ENCODE measurements at regions of chr11 and their contacts with region 1.

Region 1: GRCh38 chr11:66126808-66127555 is 56.9 kb downstream of the PACS1 start:
- DNase-seq: peak; percentile 38
- H3K4me3 Mint-ChIP-seq: peak overlapping the region; percentile 67
- H3K27ac Mint-ChIP-seq: peak overlapping the region; percentile 97
- H3K4me1 Mint-ChIP-seq: peaks cover 59% of the 10 kb centered on the region
- H3K27me3 Mint-ChIP-seq: no peaks in the 10 kb centered on the region

Region 2: DNA sequence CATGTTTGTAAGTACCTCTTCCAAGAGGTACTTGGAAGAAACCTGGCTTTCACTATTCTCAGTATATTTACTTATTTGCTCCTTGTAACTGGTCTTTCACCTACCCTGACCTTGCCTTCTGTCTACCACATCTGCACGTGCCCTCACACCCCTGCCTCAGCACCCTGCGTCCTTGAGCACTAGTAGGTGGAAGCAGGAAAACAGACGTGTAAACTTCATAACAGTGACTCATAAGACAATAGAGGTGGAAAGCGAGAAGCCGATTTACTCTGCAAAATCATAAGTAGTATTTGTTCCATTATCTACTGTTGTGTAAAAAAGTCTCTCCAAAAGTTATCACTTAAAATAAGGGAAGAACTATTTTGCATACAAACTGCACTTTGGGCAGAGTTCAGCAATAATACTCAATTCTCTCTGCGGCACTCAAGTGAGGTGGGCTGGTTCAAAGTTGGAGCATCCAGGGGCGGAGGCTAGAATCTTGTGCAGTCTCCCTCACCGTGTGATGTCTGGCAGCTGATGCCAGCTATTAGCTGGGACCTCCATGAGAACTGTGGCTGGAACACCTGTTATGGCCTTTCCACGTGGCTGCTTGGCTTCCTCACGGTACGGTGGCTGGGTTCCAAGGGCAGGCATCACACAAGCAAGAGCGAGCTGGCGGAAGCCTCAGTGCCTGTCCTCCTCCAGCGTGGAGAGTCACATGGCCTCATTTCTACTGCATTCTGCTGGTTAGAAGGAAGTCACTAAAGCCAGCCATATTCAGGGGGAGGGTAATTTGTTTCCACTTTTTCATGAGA is 26.5 kb before region 1 on chr11:
- intact Hi-C with region 1: loop called (anchors 2 kb)
- DNase-seq: peak; percentile 63
- H3K4me3 Mint-ChIP-seq: peak overlapping the region; percentile 83
- H3K27ac Mint-ChIP-seq: peak overlapping the region; percentile 86
- H3K4me1 Mint-ChIP-seq: peaks cover 53% of the 10 kb centered on the region
- H3K27me3 Mint-ChIP-seq: no peaks in the 10 kb centered on the region

Region 3: GRCh38 chr11:66218846-66219620 is 92.1 kb after region 1 on chr11:
- intact Hi-C with region 1: no loop called
- DNase-seq: no peak
- H3K4me3 Mint-ChIP-seq: no peak overlapping the region
- H3K27ac Mint-ChIP-seq: peak overlapping the region; percentile 36
- H3K4me1 Mint-ChIP-seq: peaks cover 13% of the 10 kb centered on the region
- H3K27me3 Mint-ChIP-seq: no peaks in the 10 kb centered on the region

Measured in activated T-helper 1 cell treated with anti-CD3 and anti-CD28 coated beads, Interleukin-12 subunit alpha, Interleukin-12 subunit beta, Interleukin-2, Interleukin-4 antibody, amounts not matched to agents 30 ng/mL and 10 ng/mL and 1 ng/mL, durations not matched to agents 14 hours and 24 hours and 36 hours (primary cell).